ENCODE measurements at regions of chr12 and their contacts with region 1.

Region 1: GRCh38 chr12:77433799-77434198 is 368.4 kb upstream of the E2F7 start:
- DNase-seq: peak; percentile 6
- ATAC-seq: no peak
- H3K4me3 ChIP-seq: no peak overlapping the region
- H3K27ac ChIP-seq: no peak overlapping the region
- H3K4me1 ChIP-seq: no peaks in the 10 kb centered on the region
- H3K27me3 ChIP-seq: no peaks in the 10 kb centered on the region
- CTCF ChIP-seq: no peak
- POLR2A ChIP-seq: no peak
- RAD21 ChIP-seq: no peak

Region 2: GRCh38 chr12:77366616-77367015 is 67.2 kb before region 1 on chr12:
- CTCF ChIA-PET with region 1: interaction called, 12 read pairs
- POLR2A ChIA-PET with region 1: no interaction called
- dilution Hi-C with region 1: no loop called
- in situ Hi-C with region 1: no loop called
- intact Hi-C with region 1: no loop called
- DNase-seq: no peak
- ATAC-seq: no peak
- H3K4me3 ChIP-seq: no peak overlapping the region
- H3K27ac ChIP-seq: no peak overlapping the region
- H3K4me1 ChIP-seq: no peaks in the 10 kb centered on the region
- H3K27me3 ChIP-seq: no peaks in the 10 kb centered on the region; the same call in 1 of the 2 replicates
- CTCF ChIP-seq: no peak
- POLR2A ChIP-seq: no peak
- RAD21 ChIP-seq: no peak

Region 3: DNA sequence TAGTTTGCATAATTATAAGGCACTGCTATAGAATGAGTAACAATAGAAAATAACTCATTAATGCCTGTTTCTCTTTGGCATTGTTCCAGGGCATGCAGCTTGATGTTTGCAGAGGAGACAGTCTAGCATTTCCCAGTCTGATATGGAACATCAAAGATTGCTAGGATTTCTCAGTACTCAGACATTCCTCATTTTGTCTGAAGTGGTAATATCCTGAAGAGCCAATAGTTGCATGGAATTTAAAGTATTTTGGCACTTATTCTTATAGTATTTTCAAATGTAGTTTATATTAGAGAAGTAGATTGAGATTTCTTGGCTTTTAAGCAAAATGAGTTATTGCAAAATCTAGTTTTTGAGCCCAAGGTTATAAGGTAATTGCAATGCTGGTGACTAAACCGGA is 31.1 kb before region 1 on chr12:
- CTCF ChIA-PET with region 1: no interaction called
- POLR2A ChIA-PET with region 1: no interaction called
- dilution Hi-C with region 1: no loop called
- in situ Hi-C with region 1: no loop called
- intact Hi-C with region 1: no loop called
- DNase-seq: peak; percentile 3
- ATAC-seq: no peak
- H3K4me3 ChIP-seq: no peak overlapping the region
- H3K27ac ChIP-seq: no peak overlapping the region
- H3K4me1 ChIP-seq: no peaks in the 10 kb centered on the region
- H3K27me3 ChIP-seq: no peaks in the 10 kb centered on the region
- CTCF ChIP-seq: no peak
- POLR2A ChIP-seq: no peak
- RAD21 ChIP-seq: no peak

Region 4: DNA sequence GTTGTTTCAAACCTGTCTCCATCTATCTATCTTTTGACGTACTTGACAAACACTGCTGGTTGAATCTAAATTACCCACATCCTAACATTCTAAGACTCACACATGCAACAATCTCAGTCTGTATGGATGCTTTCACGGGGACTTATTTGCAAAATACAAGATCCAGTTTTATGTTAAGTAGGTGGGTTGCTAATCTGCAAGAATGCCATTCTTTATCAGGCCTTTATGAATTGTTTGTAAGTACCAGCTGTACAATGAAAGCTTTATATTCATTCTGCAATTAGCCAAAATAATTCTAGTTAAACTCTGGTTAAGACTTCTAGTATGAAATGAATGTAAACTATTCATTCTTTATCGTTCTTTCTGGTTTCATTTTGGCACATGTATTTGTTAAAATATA is 532.0 kb after region 1 on chr12:
- CTCF ChIA-PET with region 1: no interaction called
- POLR2A ChIA-PET with region 1: no interaction called
- dilution Hi-C with region 1: no loop called
- in situ Hi-C with region 1: no loop called
- intact Hi-C with region 1: no loop called
- DNase-seq: peak; percentile 17
- ATAC-seq: peak; percentile 54
- H3K4me3 ChIP-seq: peak overlapping the region; percentile 7; the same call in 1 of the 2 replicates
- H3K27ac ChIP-seq: peak overlapping the region; percentile 50; the same call in 1 of the 2 replicates
- H3K4me1 ChIP-seq: peaks cover 3% of the 10 kb centered on the region; the same call in 1 of the 2 replicates
- H3K27me3 ChIP-seq: no peaks in the 10 kb centered on the region
- CTCF ChIP-seq: no peak
- POLR2A ChIP-seq: no peak
- RAD21 ChIP-seq: no peak